ENCODE measurements at regions of chr11 and their contacts with region 1.

Region 1: GRCh38 chr11:57644748-57645688 is 4.7 kb downstream of the YPEL4 start:
- DNase-seq: peak; percentile 67 to 91 (median 84)
- H3K4me3 ChIP-seq: peak overlapping the region in 9 of 59 donors; percentile 7 to 31 (median 13)
- H3K27ac ChIP-seq: peak overlapping the region in 38 of 59 donors; percentile 1 to 95 (median 50)
- H3K27me3 ChIP-seq: peaks cover 0 to 6% (median 0%) of the 10 kb centered on the region in 45 donors
- CTCF ChIP-seq: peak; percentile 65 to 94 (median 84)

Region 2: GRCh38 chr11:57335343-57336110 is 309.5 kb before region 1 on chr11 and contains the start of gene SSRP1:
- intact Hi-C with region 1: loop called in 1 of 2 experiments (anchors 5 kb)
- DNase-seq: peak; percentile 81 to 95 (median 92)
- H3K4me3 ChIP-seq: peak within 1 kb of the TSS; percentile 47 to 98 (median 88)
- H3K27ac ChIP-seq: peak within 1 kb of the TSS; percentile 35 to 96 (median 84)
- H3K27me3 ChIP-seq: no peaks in the 10 kb centered on the region
- CTCF ChIP-seq: peak in 53 of 56 donors; percentile 15 to 65 (median 37)
- total RNA-seq, gene SSRP1: 43.7 to 71.1 (median 56.7) TPM

Region 3: GRCh38 chr11:57456960-57457642 is 187.9 kb before region 1 on chr11:
- intact Hi-C with region 1: loop called (anchors 2 to 5 kb)
- DNase-seq: peak; percentile 82 to 93 (median 90)
- H3K4me3 ChIP-seq: peak overlapping the region in 13 of 59 donors; percentile 7 to 69 (median 21)
- H3K27ac ChIP-seq: no peak overlapping the region
- H3K27me3 ChIP-seq: peaks cover 0 to 43% (median 13%) of the 10 kb centered on the region in 45 donors
- CTCF ChIP-seq: peak; percentile 90 to 99 (median 98)

Region 4: DNA sequence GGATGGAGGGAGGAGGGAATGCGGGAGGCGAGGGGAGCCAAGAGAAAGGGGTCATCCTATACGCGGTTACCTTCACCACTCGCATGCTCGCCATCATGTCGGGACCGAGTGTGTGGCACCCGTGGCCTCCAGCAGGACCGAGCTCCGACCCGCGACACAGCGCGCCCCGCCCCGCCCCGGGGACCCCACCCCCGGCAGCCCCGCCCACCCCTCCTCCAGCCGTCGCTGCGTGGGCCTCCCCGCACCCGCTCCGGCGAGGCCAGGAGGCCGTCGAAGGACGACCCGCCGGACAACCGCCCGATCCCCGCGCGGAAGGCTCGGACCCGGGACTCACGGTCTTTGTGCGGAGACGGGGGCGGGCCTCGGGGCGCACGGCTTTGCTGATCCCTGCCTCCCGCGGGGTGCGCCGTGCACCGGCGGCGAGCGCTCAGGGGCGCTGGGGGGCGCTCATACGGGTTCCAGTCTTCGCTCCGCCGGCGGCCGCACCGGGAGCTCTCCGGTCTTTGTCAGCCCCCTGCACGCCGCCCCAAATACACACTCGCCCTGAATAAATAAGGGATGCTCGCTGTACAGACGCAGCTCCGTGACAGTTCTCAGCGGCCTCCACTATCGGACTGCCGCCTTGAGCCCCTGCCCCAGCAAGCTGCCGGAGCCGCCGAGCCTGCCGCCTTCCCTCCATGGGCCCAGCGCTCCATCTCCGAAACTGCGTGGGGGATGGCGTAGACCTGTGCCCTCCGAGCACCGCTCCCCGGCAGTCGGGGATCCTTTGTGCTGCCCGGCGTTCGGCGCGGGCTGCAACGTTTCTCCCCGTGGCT is 77.3 kb before region 1 on chr11 and contains the start of gene UBE2L6:
- intact Hi-C with region 1: loop called (anchors 2 kb)
- DNase-seq: peak; percentile 51 to 84 (median 70)
- H3K4me3 ChIP-seq: peak within 1 kb of the TSS; percentile 65 to 98 (median 92)
- H3K27ac ChIP-seq: peak within 1 kb of the TSS; percentile 66 to 98 (median 92)
- H3K27me3 ChIP-seq: no peaks in the 10 kb centered on the region
- CTCF ChIP-seq: peak in 34 of 56 donors; percentile 77 to 95 (median 88)
- total RNA-seq, gene UBE2L6: 40.6 to 139 (median 59.0) TPM

Region 5: DNA sequence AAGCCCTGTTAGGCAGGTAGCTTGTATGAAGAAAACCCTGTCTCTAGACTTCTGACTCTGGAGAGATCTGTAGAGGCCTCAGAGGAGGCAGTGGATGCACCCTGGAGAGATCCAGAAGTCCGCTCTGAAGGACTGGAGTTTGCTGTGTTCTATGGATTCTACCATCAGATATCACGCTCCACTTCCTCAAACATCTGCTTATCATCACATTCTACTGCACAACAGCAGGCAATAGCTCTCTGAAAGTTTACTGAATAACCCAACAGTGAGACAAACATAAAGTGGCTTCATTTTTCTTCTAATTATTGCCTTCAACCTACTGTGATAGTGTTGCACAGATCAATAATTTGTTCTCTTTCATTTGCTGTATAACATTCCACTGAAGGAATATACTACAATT is 319.6 kb after region 1 on chr11:
- intact Hi-C with region 1: no loop called
- DNase-seq: no peak
- H3K4me3 ChIP-seq: no peak overlapping the region
- H3K27ac ChIP-seq: no peak overlapping the region
- H3K27me3 ChIP-seq: no peaks in the 10 kb centered on the region
- CTCF ChIP-seq: no peak

Region 6: GRCh38 chr11:59142530-59143507 is 1497.8 kb after region 1 on chr11 and contains the start of gene FAM111A:
- intact Hi-C with region 1: loop called in 1 of 2 experiments (anchors 10 kb)
- DNase-seq: peak; percentile 53 to 86 (median 75)
- H3K4me3 ChIP-seq: peak within 1 kb of the TSS; percentile 62 to 98 (median 83)
- H3K27ac ChIP-seq: peak within 1 kb of the TSS in 56 of 59 donors; percentile 12 to 94 (median 80)
- H3K27me3 ChIP-seq: no peaks in the 10 kb centered on the region
- CTCF ChIP-seq: peak in 48 of 56 donors; percentile 7 to 55 (median 34)
- total RNA-seq, gene FAM111A: 2.6 to 22.5 (median 9.5) TPM

Measured in dorsolateral prefrontal cortex (tissue), 120 donors.